ENCODE measurements at regions of chr5 and their contacts with region 1.

Region 1: GRCh38 chr5:62779010-62779422 is 200.4 kb downstream of the LRRC70 start:
- DNase-seq: peak; percentile 64
- H3K4me3 Mint-ChIP-seq: no peak overlapping the region
- H3K27ac Mint-ChIP-seq: no peak overlapping the region
- H3K4me1 Mint-ChIP-seq: peaks cover 10% of the 10 kb centered on the region
- H3K27me3 Mint-ChIP-seq: peaks cover 2% of the 10 kb centered on the region

Region 2: GRCh38 chr5:62206150-62206829 is 572.7 kb before region 1 on chr5:
- intact Hi-C with region 1: loop called (anchors 10 kb)
- DNase-seq: no peak
- H3K4me3 Mint-ChIP-seq: no peak overlapping the region
- H3K27ac Mint-ChIP-seq: no peak overlapping the region
- H3K4me1 Mint-ChIP-seq: no peaks in the 10 kb centered on the region
- H3K27me3 Mint-ChIP-seq: peaks cover 33% of the 10 kb centered on the region

Region 3: GRCh38 chr5:62448528-62448927 is 330.5 kb before region 1 on chr5:
- intact Hi-C with region 1: loop called (anchors 5 kb)
- DNase-seq: no peak
- H3K4me3 Mint-ChIP-seq: no peak overlapping the region
- H3K27ac Mint-ChIP-seq: no peak overlapping the region
- H3K4me1 Mint-ChIP-seq: peaks cover 1% of the 10 kb centered on the region
- H3K27me3 Mint-ChIP-seq: no peaks in the 10 kb centered on the region

Region 4: GRCh38 chr5:62460578-62460983 is 318.4 kb before region 1 on chr5:
- intact Hi-C with region 1: loop called (anchors 1 kb)
- DNase-seq: no peak
- H3K4me3 Mint-ChIP-seq: no peak overlapping the region
- H3K27ac Mint-ChIP-seq: no peak overlapping the region
- H3K4me1 Mint-ChIP-seq: peaks cover under 1% of the 10 kb centered on the region
- H3K27me3 Mint-ChIP-seq: no peaks in the 10 kb centered on the region

Measured in activated CD4-positive, alpha-beta T cell treated with anti-CD3 and anti-CD28 coated beads, Interleukin-2, amount 10 ng/mL, durations not matched to agents 24 days and 14 days (primary cell).